MCF 10A (cell line): ENCODE measurements at regions of chr1 and their contacts with region 1.

Region 1: GRCh38 chr1:70685300-70686241 is 274.5 kb downstream of the CTH start:
- DNase-seq: peak; percentile 80
- H3K4me3 Mint-ChIP-seq: no peak overlapping the region
- H3K27ac Mint-ChIP-seq: no peak overlapping the region
- H3K4me1 Mint-ChIP-seq: no peaks in the 10 kb centered on the region
- H3K27me3 Mint-ChIP-seq: peaks cover 56% of the 10 kb centered on the region
- CTCF ChIP-seq: peak; percentile 88

Region 2: DNA sequence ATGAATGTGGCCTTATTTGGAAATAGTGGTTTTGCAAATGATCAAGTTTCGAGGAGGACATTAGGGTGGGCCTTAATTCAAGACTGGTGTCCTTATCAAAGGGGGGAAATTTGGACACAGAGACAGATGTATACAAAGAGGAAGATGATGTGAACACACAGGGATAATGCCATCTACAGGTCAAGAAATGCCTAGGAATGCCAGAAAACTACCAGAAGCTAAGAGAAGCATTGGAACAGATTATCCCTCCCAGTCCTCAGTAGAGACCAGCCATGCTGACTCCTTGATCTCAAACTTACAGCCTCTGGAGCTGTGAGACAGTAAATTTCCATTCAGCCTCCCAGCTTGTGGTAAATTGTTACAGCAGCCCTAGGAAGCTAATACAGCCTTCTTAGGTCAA is 210.7 kb after region 1 on chr1:
- CTCF ChIA-PET with region 1: no interaction called
- POLR2A ChIA-PET with region 1: no interaction called
- intact Hi-C with region 1: loop called (anchors 5 kb)
- DNase-seq: peak; percentile 22
- H3K4me3 Mint-ChIP-seq: no peak overlapping the region
- H3K27ac Mint-ChIP-seq: no peak overlapping the region
- H3K4me1 Mint-ChIP-seq: no peaks in the 10 kb centered on the region
- H3K27me3 Mint-ChIP-seq: peaks cover 59% of the 10 kb centered on the region
- CTCF ChIP-seq: peak; percentile 22

Region 3: DNA sequence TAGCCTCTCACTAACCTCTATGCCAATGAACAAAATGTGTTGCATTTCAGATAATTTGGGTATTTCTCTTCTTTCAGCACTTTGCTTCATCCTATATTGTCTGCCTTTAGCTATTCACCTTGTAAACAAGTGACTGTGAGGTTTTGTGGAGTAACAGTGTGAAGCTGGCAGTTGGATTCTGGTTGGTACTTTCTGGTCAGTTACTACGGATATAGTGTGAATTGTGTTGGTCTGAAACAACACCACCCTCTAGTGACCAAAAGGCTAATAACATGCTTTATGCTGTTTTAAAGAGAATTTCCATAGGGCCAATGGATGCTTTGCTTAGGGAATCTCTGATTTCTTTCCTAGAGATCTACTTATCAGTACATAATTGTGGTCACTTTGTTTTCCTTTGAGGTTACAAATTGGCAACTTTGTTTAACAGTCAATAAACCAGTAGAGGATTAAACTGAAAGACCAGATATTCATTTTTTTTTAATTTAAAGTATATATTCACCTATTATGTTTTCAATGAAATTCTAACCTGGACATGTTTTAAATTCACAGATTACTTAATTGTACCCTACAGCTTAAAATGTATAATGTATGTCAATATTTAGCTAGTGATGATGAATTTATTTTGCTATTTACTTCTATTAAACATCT is 364.5 kb after region 1 on chr1:
- CTCF ChIA-PET with region 1: interaction called, 6 read pairs
- POLR2A ChIA-PET with region 1: no interaction called
- intact Hi-C with region 1: loop called (anchors 1 kb)
- DNase-seq: peak; percentile 69
- H3K4me3 Mint-ChIP-seq: no peak overlapping the region
- H3K27ac Mint-ChIP-seq: no peak overlapping the region
- H3K4me1 Mint-ChIP-seq: no peaks in the 10 kb centered on the region
- H3K27me3 Mint-ChIP-seq: peaks cover 47% of the 10 kb centered on the region
- CTCF ChIP-seq: peak; percentile 58

Region 4: GRCh38 chr1:71135571-71135970 is 450.0 kb after region 1 on chr1:
- CTCF ChIA-PET with region 1: no interaction called
- POLR2A ChIA-PET with region 1: no interaction called
- intact Hi-C with region 1: no loop called
- DNase-seq: no peak
- H3K4me3 Mint-ChIP-seq: no peak overlapping the region
- H3K27ac Mint-ChIP-seq: no peak overlapping the region
- H3K4me1 Mint-ChIP-seq: no peaks in the 10 kb centered on the region
- H3K27me3 Mint-ChIP-seq: no peaks in the 10 kb centered on the region
- CTCF ChIP-seq: no peak